Mammary epithelial cell (primary cell): ENCODE measurements at regions of chr2 and their contacts with region 1.

Region 1: GRCh38 chr2:7272210-7272609 is 355.0 kb downstream of the RNF144A start:
- DNase-seq: peak; percentile 76
- H3K4me3 ChIP-seq: no peak overlapping the region
- H3K27ac ChIP-seq: no peak overlapping the region
- H3K4me1 ChIP-seq: no peaks in the 10 kb centered on the region
- H3K27me3 ChIP-seq: no peaks in the 10 kb centered on the region
- CTCF ChIP-seq: no peak

Region 2: DNA sequence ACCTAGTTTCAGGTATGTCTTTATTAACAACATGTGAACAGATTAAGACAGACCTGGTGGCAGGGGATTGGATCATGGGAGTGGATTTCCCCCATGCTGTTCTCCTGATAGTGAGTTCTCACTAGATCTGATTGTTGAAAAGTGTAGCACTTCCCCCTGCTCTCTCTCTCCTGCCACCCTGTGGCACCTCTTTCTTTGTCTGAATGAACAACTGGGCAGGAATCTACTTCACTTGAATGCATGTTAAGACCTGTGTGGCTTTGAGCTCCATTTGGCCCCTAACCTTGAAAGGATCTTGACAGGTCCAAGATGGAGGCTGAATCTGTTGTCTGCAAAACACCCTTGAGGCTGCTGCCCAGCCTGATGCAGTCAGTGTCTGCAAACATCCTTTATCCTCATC is 160.6 kb before region 1 on chr2:
- CTCF ChIA-PET with region 1: no interaction called
- dilution Hi-C with region 1: no loop called
- in situ Hi-C with region 1: no loop called
- intact Hi-C with region 1: no loop called
- DNase-seq: peak; percentile 54
- H3K4me3 ChIP-seq: no peak overlapping the region
- H3K27ac ChIP-seq: no peak overlapping the region
- H3K4me1 ChIP-seq: no peaks in the 10 kb centered on the region
- H3K27me3 ChIP-seq: no peaks in the 10 kb centered on the region
- CTCF ChIP-seq: peak; percentile 15 to 55

Region 3: DNA sequence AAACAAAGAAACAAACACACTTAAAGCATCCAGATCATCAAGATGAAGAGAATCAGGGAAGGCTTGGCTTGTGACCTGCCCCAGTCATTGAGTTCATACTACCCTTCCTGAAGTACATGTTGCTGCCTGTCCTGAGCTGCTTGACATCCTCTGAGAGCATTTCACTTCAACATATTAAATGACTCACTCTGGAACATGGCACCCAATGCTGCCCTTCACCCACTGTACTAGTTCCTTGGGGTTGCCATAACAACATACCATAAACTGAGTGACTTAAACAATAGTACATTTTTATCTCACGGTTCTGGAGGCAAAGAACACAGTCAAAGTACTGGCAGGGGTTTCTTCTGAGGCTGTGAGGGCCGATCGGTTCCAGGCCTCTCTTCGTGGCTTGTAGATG is 16.3 kb after region 1 on chr2:
- CTCF ChIA-PET with region 1: no interaction called
- dilution Hi-C with region 1: no loop called
- in situ Hi-C with region 1: no loop called
- intact Hi-C with region 1: loop called (anchors 1 kb)
- DNase-seq: peak; percentile 94
- H3K4me3 ChIP-seq: no peak overlapping the region
- H3K27ac ChIP-seq: peak overlapping the region; percentile 90
- H3K4me1 ChIP-seq: peaks cover 14% of the 10 kb centered on the region
- H3K27me3 ChIP-seq: no peaks in the 10 kb centered on the region
- CTCF ChIP-seq: no peak

Region 4: GRCh38 chr2:7363906-7364305 is 91.7 kb after region 1 on chr2:
- CTCF ChIA-PET with region 1: no interaction called
- dilution Hi-C with region 1: no loop called
- in situ Hi-C with region 1: no loop called
- intact Hi-C with region 1: no loop called
- DNase-seq: no peak
- H3K4me3 ChIP-seq: no peak overlapping the region
- H3K27ac ChIP-seq: no peak overlapping the region
- H3K4me1 ChIP-seq: peaks cover 5% of the 10 kb centered on the region
- H3K27me3 ChIP-seq: no peaks in the 10 kb centered on the region
- CTCF ChIP-seq: peak in 1 of 2 donors; percentile 56